ENCODE measurements at regions of chr10 and their contacts with region 1.

Region 1: GRCh38 chr10:60646966-60647796 is 131.1 kb upstream of the CDK1 start:
- DNase-seq: no peak
- H3K4me3 ChIP-seq: no peak overlapping the region
- H3K27ac ChIP-seq: no peak overlapping the region
- H3K4me1 ChIP-seq: peaks cover 0 to 9% (median 6%) of the 10 kb centered on the region in 4 experiments; a peak in 3 of 7 replicates
- H3K27me3 ChIP-seq: no peaks in the 10 kb centered on the region
- CTCF ChIP-seq: peak in 2 of 3 experiments; percentile 52 to 64; a peak in 3 of 4 replicates
- EP300 ChIP-seq: no peak
- POLR2A ChIP-seq: no peak
- RAD21 ChIP-seq: peak; percentile 79 to 82

Region 2: GRCh38 chr10:60629332-60629731 is 17.8 kb before region 1 on chr10:
- CTCF ChIA-PET with region 1: interaction called, 41 read pairs
- POLR2A ChIA-PET with region 1: no interaction called
- DNase-seq: no peak
- H3K4me3 ChIP-seq: no peak overlapping the region
- H3K27ac ChIP-seq: no peak overlapping the region
- H3K4me1 ChIP-seq: no peaks in the 10 kb centered on the region
- H3K27me3 ChIP-seq: no peaks in the 10 kb centered on the region
- CTCF ChIP-seq: no peak
- EP300 ChIP-seq: no peak
- POLR2A ChIP-seq: no peak
- RAD21 ChIP-seq: no peak

Region 3: DNA sequence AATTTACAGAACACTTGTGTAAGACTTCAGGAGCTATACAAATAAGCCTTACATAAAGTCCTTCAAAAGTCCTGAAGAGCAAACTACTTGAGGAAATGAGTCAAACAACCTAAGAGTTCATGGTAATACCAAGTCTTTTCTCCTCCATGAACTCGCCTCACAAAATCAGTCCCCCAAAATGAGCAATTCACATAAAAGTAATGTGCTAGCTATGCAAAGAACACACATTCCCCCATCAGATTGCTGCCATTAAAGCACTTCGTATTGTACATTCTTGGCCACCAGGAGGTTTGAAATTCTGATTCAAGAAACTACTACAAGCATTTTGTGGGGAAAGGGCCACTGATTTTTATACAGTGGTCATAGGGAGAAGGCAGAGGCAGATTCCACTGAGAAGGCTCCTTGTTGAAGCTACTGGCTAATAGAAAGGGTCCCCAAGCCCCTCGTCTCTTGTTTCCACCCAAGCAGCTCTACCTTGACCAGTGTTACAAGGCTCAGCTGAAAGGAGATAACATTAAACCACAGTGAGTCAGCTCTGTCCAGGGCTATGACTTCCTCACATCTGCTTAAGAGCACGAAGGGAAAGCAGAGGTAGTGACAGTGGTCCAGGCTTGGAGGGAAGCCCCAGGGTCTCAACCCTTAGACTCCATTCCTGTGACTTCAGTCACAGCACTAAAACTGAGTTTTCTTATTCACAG is 15.9 kb after region 1 on chr10:
- CTCF ChIA-PET with region 1: interaction called, 56 read pairs
- POLR2A ChIA-PET with region 1: interaction called, 4 read pairs
- DNase-seq: no peak
- H3K4me3 ChIP-seq: no peak overlapping the region
- H3K27ac ChIP-seq: no peak overlapping the region
- H3K4me1 ChIP-seq: peaks cover 0 to 12% (median 2%) of the 10 kb centered on the region in 4 experiments; a peak in 4 of 7 replicates
- H3K27me3 ChIP-seq: no peaks in the 10 kb centered on the region
- CTCF ChIP-seq: no peak
- EP300 ChIP-seq: no peak
- POLR2A ChIP-seq: no peak
- RAD21 ChIP-seq: no peak

Region 4: GRCh38 chr10:60769406-60769805 is 122.2 kb after region 1 on chr10:
- CTCF ChIA-PET with region 1: interaction called, 26 read pairs
- POLR2A ChIA-PET with region 1: no interaction called
- DNase-seq: no peak
- H3K4me3 ChIP-seq: no peak overlapping the region
- H3K27ac ChIP-seq: no peak overlapping the region
- H3K4me1 ChIP-seq: no peaks in the 10 kb centered on the region; a peak in 1 of 7 replicates
- H3K27me3 ChIP-seq: no peaks in the 10 kb centered on the region
- CTCF ChIP-seq: no peak
- EP300 ChIP-seq: no peak
- POLR2A ChIP-seq: no peak
- RAD21 ChIP-seq: no peak